ENCODE measurements at regions of chr22 and their contacts with region 1.

Region 1: DNA sequence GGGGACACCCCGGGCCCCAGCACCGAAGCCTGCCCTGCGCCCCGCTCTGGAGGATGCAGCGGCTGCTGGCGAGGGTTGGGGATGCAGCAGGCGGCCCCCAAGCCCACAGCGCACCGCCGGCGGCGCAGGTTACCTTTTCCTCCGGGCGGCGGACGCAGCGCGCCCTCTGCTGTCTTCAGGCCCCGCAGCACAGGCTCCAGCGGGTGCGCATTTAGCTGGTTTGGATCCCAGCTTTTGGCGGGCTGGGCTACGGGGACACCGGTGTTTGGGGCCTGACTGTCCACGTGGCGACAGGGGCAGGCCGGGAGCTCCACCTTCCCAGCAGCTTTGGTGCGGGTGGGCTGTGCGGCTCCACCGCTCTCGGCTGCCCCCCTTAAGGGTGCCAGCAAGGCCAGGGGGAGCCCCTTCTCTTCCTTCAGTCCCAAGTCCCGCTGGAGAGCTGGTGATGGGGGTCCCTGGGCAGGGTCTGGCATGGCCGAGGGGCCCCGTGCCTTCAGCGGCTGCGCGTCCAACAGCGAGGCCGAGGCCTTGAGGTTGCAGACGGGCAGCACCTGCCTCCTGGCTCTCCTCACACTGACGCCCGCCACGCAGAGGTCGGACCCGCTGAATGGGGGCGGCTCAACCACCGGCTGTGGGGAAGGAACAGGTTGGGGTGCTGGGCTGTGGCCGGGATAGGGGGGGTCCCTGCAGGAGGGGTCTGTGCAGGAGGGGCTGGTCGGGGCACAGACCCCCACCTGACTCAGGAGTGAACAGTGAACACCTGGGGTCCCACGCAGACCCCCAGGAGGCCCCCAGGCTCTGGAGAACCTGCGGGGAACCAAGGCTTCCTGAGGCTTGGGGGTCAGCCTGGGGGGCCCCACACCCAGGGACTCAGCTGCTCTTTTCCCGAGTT is 18.0 kb upstream of the IL17REL start:
- DNase-seq: peak in 1 of 2 donors; percentile 83
- ATAC-seq: peak; percentile 94

Region 2: GRCh38 chr22:49767355-49768062 is 263.0 kb before region 1 on chr22:
- intact Hi-C with region 1: loop called in 1 of 2 experiments (anchors 10 kb)
- DNase-seq: no peak
- ATAC-seq: peak; percentile 55

Region 3: GRCh38 chr22:49929208-49930136 is 101.1 kb before region 1 on chr22:
- intact Hi-C with region 1: loop called (anchors 5 to 10 kb)
- DNase-seq: peak; percentile 51 to 78
- ATAC-seq: peak; percentile 65

Region 4: DNA sequence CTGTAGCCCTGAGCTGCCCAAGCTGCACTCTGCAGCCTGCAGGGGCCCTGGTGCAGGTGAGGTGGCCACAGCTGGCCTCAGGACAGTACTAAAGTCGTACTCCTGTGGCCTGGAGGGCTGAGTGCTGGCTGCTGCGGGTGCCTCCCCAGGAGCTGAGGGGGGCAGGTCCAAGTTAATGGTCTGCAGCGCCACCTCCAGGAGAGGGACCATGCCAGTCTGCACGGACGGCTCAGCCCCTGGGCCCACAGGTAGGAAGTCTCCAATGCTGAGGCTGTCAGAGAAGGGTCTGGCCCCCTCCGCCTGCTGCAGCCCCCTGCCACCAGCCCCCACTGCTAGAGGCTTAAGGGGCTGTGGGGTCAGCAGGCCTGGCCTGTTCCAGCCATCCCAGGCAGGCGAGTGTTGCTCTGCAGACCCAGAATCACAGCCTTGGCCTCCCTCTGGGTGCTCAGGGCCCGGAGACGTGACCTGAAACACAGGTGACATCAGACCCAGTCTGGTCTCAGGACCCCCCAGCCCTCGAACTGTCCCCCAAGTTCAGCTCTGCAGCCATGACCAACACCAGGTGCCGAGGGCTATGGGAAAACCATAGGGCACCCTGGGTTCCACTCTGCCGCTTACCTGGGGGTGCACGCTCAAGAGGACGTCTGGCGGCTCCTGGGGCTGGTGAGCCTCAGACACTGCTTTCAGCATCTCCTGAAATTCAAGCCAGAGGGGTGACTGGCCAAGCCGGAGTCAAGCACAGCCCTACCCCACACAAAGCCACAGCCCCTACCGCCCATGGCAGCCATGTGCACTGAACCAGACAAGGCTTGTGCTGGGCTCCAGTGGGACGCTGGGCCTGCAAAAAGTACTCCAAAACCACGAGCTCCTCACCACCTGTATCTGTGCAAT is 191.1 kb after region 1 on chr22:
- intact Hi-C with region 1: no loop called
- DNase-seq: no peak
- ATAC-seq: no peak

Measured in left colon (tissue), 2 donors.